ENCODE measurements at regions of chr11 and their contacts with region 1.

Region 1: GRCh38 chr11:29129850-29130249 is 887.0 kb downstream of the KCNA4 start:
- DNase-seq: no peak
- ATAC-seq: no peak
- H3K4me3 ChIP-seq: no peak overlapping the region
- H3K4me3 Mint-ChIP-seq: no peak overlapping the region
- H3K27ac ChIP-seq: no peak overlapping the region
- H3K27ac Mint-ChIP-seq: no peak overlapping the region
- H3K4me1 ChIP-seq: no peaks in the 10 kb centered on the region
- H3K4me1 Mint-ChIP-seq: no peaks in the 10 kb centered on the region
- H3K27me3 ChIP-seq: no peaks in the 10 kb centered on the region
- H3K27me3 Mint-ChIP-seq: no peaks in the 10 kb centered on the region

Region 2: DNA sequence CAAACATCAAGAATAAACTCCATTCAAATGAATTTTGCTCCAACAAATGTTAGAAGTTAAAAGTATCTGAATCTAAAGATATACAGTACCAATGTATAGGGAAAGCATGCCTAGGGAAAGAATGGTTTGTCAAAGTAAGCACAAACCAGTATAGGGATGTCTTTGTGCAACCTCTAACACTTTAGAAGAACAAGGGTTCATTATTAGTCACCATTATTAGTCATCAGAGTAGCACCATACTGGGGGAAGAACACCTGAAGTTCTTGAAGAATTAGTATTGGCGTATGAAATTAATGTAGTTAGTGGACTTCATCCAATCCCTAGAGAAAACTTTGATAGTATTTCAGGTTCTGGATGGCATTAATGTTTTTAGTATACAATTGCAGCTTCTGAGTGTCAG is 77.9 kb before region 1 on chr11:
- CTCF ChIA-PET with region 1: no interaction called
- POLR2A ChIA-PET with region 1: no interaction called
- intact Hi-C with region 1: no loop called
- DNase-seq: no peak
- ATAC-seq: no peak
- H3K4me3 ChIP-seq: no peak overlapping the region
- H3K4me3 Mint-ChIP-seq: no peak overlapping the region
- H3K27ac ChIP-seq: no peak overlapping the region
- H3K27ac Mint-ChIP-seq: no peak overlapping the region
- H3K4me1 ChIP-seq: no peaks in the 10 kb centered on the region
- H3K4me1 Mint-ChIP-seq: no peaks in the 10 kb centered on the region
- H3K27me3 ChIP-seq: no peaks in the 10 kb centered on the region
- H3K27me3 Mint-ChIP-seq: no peaks in the 10 kb centered on the region

Region 3: DNA sequence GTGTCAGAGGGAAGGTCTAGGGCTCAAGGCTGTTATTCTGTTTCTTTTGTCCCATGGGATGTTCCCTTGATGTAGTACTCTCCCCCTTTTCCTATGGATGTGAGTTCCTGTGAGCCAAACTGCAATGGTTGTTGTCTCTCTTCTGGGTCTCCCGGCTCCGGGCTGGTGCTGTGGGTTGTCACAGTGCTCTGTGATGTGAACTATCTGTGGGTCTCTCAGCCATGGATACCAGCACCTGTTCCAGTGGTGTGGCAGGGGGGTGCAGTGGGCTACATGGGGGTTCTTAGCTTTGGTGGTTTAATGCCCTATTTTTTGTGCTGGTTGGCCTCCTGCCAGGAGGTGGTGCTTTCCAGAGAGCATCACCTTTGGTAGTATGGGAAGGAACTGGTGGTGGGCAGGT is 54.1 kb before region 1 on chr11:
- CTCF ChIA-PET with region 1: no interaction called
- POLR2A ChIA-PET with region 1: no interaction called
- intact Hi-C with region 1: loop called in 1 of 2 experiments (anchors 10 kb)
- DNase-seq: no peak
- ATAC-seq: no peak
- H3K4me3 ChIP-seq: no peak overlapping the region
- H3K4me3 Mint-ChIP-seq: no peak overlapping the region
- H3K27ac ChIP-seq: no peak overlapping the region
- H3K27ac Mint-ChIP-seq: no peak overlapping the region
- H3K4me1 ChIP-seq: no peaks in the 10 kb centered on the region
- H3K4me1 Mint-ChIP-seq: no peaks in the 10 kb centered on the region
- H3K27me3 ChIP-seq: no peaks in the 10 kb centered on the region
- H3K27me3 Mint-ChIP-seq: no peaks in the 10 kb centered on the region

Region 4: GRCh38 chr11:30879322-30880005 is 1749.6 kb after region 1 on chr11:
- CTCF ChIA-PET with region 1: no interaction called
- POLR2A ChIA-PET with region 1: no interaction called
- intact Hi-C with region 1: no loop called
- DNase-seq: no peak
- ATAC-seq: no peak
- H3K4me3 ChIP-seq: no peak overlapping the region
- H3K4me3 Mint-ChIP-seq: no peak overlapping the region
- H3K27ac ChIP-seq: no peak overlapping the region
- H3K27ac Mint-ChIP-seq: no peak overlapping the region
- H3K4me1 ChIP-seq: no peaks in the 10 kb centered on the region
- H3K4me1 Mint-ChIP-seq: no peaks in the 10 kb centered on the region
- H3K27me3 ChIP-seq: no peaks in the 10 kb centered on the region
- H3K27me3 Mint-ChIP-seq: peaks cover 0 to 6% (median 0%) of the 10 kb centered on the region in 5 donors

Measured in naive thymus-derived CD4-positive, alpha-beta T cell (primary cell).